Activated CD8-positive, alpha-beta T cell treated with anti-CD3 and anti-CD28 coated beads for 36 hours (primary cell): ENCODE measurements at regions of chr14 and their contacts with region 1.

Region 1: DNA sequence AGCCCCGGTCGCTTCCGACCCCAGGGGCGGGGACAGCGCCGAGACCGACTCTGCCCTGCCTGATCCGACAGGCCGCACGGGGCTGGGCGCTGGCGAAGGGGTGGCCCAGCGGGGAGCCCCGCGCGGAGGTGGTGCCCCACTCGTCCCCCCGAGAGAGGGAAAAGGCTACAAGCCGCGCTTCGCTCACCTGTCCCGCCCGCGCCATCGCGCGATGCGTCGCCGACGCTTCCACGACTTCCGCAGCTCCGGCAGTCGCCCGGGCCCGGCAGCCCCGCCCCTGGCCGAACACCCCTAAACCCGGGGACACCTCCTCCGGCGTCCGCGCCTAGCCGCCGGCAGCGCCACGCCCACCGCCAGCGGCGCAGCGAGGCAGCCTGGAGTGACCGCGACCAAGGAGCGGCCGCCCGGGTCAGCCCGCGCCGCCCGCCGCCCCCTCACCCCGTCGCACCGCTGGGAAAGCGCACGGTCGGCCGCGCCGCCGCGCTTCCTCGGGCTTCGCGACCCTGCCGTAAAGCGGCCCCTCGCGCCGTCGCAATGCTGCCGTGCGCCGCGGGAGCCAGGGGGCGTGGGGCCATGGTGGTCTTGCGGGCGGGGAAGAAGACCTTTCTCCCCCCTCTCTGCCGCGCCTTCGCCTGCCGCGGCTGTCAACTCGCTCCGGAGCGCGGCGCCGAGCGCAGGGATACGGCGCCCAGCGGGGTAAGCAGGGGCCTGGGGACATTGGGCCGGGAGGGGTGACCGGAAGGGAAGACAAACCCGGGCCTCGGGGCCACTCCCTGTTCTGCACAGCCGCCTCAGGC is at the starts of genes BAG5 and COA8:
- DNase-seq: peak; percentile 92
- ATAC-seq: peak; percentile 83
- H3K4me3 Mint-ChIP-seq: peak within 1 kb of the TSS; percentile 100
- H3K27ac Mint-ChIP-seq: peak within 1 kb of the TSS; percentile 97
- H3K4me1 Mint-ChIP-seq: peaks cover 48% of the 10 kb centered on the region
- H3K27me3 Mint-ChIP-seq: no peaks in the 10 kb centered on the region
- CTCF ChIP-seq: no peak
- total RNA-seq, gene BAG5: 28.8 to 29.6 TPM
- total RNA-seq, gene COA8: 40.3 to 45.6 TPM

Region 2: DNA sequence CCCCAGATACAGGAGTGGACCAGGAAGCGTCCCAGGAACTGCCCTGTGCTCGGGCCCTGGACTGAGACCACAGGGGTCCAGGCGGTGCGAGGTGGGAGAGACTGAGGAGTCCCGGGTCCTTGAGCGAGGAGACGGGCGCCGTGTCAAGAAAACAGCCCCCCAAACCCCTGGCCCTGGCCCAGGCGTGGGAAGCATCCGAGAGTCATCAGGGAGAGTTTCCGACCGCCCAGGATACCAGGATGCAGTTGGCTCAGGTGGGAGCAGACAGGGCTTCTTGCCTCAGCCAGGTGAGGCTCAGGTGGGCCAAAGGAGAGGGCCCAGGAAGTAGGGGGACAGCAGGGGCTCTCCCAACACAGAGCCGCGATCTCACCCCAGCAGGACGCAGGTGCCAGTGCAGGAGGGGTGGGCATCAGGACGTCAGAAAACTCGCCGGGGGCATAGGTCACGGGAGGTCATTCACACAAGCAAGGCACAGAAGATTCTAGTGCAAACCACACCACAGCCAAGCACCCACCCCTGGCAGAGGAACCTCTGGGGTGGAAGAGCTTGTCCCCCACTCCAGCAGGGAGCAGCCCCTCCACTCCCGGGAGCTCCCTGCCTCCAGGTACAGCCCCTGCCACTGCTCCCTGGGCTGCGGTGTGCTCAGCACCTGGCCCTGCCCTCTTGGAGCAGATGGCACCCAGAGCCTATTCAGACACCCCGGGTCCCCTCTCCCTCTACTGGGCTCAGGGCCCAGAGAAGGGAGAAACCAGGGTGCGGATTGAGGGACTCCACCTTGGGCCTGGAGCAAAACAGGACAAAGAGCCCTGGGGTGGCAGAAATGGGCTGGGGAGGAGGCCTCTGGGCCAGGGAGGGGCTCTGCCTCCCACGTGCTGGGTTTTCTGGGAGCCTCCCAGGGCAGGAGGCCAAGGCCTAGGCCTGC is 331.0 kb before region 1 on chr14:
- CTCF ChIA-PET with region 1: no interaction called
- POLR2A ChIA-PET with region 1: no interaction called
- intact Hi-C with region 1: no loop called
- DNase-seq: no peak
- ATAC-seq: no peak
- H3K4me3 Mint-ChIP-seq: no peak overlapping the region
- H3K27ac Mint-ChIP-seq: no peak overlapping the region
- H3K4me1 Mint-ChIP-seq: no peaks in the 10 kb centered on the region
- H3K27me3 Mint-ChIP-seq: peaks cover 10% of the 10 kb centered on the region
- CTCF ChIP-seq: no peak

Region 3: GRCh38 chr14:103508521-103509329 is 53.9 kb before region 1 on chr14:
- CTCF ChIA-PET with region 1: no interaction called
- POLR2A ChIA-PET with region 1: no interaction called
- intact Hi-C with region 1: no loop called
- DNase-seq: no peak
- ATAC-seq: no peak
- H3K4me3 Mint-ChIP-seq: no peak overlapping the region
- H3K27ac Mint-ChIP-seq: no peak overlapping the region
- H3K4me1 Mint-ChIP-seq: no peaks in the 10 kb centered on the region
- H3K27me3 Mint-ChIP-seq: no peaks in the 10 kb centered on the region
- CTCF ChIP-seq: no peak

Region 4: GRCh38 chr14:103520657-103521437 is 41.8 kb before region 1 on chr14:
- CTCF ChIA-PET with region 1: interaction called, 10 read pairs
- POLR2A ChIA-PET with region 1: interaction called, 3 read pairs
- intact Hi-C with region 1: no loop called
- DNase-seq: peak; percentile 76
- ATAC-seq: peak; percentile 72
- H3K4me3 Mint-ChIP-seq: peak overlapping the region; percentile 50
- H3K27ac Mint-ChIP-seq: no peak overlapping the region
- H3K4me1 Mint-ChIP-seq: peaks cover 10% of the 10 kb centered on the region
- H3K27me3 Mint-ChIP-seq: peaks cover 12% of the 10 kb centered on the region
- CTCF ChIP-seq: peak; percentile 59

Region 5: DNA sequence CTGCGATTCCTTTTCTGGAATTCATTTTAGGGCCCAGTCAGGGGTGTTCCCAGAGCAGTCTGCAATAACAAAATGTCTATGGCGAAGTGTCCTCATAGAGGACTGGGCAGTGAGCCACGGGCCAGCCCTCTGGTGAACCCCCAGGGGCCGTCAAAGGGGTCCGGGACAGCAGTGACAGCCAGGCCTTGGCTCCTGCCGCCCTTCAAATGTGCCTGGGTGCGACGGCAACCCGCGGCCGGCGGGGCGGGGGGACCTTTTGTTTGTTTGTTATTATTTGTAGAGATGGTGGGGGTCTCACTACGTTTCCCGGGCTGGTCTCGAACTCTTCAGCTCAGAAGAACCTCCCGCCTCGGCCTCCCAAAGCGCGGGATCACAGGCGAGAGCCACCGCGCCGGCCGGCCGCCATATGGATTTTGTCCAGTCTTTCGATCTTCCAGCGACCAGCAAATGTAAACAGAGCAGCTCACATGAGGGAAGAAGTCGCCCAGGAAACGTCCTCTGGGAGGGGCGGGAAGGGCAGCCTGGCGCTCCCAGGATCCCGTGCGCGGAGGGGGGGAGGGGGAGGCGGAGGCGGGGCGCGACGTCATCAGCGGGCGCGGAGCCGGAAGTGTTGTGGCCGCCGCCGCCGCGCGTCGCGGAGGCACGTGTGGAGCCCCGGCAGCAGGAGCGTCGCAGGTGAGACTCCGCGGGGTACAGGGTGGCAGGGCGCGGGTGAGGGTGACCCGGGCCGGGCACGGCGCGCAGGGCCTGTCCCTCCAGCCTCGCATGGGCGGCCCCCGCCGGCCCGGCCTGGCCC is 33.8 kb before region 1 on chr14 and contains the start of gene TRMT61A:
- CTCF ChIA-PET with region 1: interaction called, 3 read pairs
- POLR2A ChIA-PET with region 1: interaction called, 28 read pairs
- intact Hi-C with region 1: no loop called
- DNase-seq: peak; percentile 71
- ATAC-seq: peak; percentile 74
- H3K4me3 Mint-ChIP-seq: peak within 1 kb of the TSS; percentile 94
- H3K27ac Mint-ChIP-seq: peak within 1 kb of the TSS; percentile 95
- H3K4me1 Mint-ChIP-seq: peaks cover 34% of the 10 kb centered on the region
- H3K27me3 Mint-ChIP-seq: peaks cover 6% of the 10 kb centered on the region
- CTCF ChIP-seq: no peak
- total RNA-seq, gene TRMT61A: 9.9 TPM

Region 6: GRCh38 chr14:103546652-103547454 is 15.8 kb before region 1 on chr14:
- CTCF ChIA-PET with region 1: interaction called, 19 read pairs
- POLR2A ChIA-PET with region 1: interaction called, 10 read pairs
- intact Hi-C with region 1: no loop called
- DNase-seq: peak; percentile 85
- ATAC-seq: peak; percentile 91
- H3K4me3 Mint-ChIP-seq: no peak overlapping the region
- H3K27ac Mint-ChIP-seq: no peak overlapping the region
- H3K4me1 Mint-ChIP-seq: no peaks in the 10 kb centered on the region
- H3K27me3 Mint-ChIP-seq: no peaks in the 10 kb centered on the region
- CTCF ChIP-seq: peak; percentile 98

Region 7: GRCh38 chr14:103576371-103577024 is 13.9 kb after region 1 on chr14:
- CTCF ChIA-PET with region 1: interaction called, 10 read pairs
- POLR2A ChIA-PET with region 1: interaction called, 4 read pairs
- intact Hi-C with region 1: no loop called
- DNase-seq: no peak
- ATAC-seq: no peak
- H3K4me3 Mint-ChIP-seq: no peak overlapping the region
- H3K27ac Mint-ChIP-seq: no peak overlapping the region
- H3K4me1 Mint-ChIP-seq: no peaks in the 10 kb centered on the region
- H3K27me3 Mint-ChIP-seq: no peaks in the 10 kb centered on the region
- CTCF ChIP-seq: no peak

Region 8: GRCh38 chr14:103628684-103629502 is 66.3 kb after region 1 on chr14 and contains the start of gene KLC1:
- CTCF ChIA-PET with region 1: no interaction called
- POLR2A ChIA-PET with region 1: interaction called, 19 read pairs
- intact Hi-C with region 1: no loop called
- DNase-seq: peak; percentile 85
- ATAC-seq: peak; percentile 81
- H3K4me3 Mint-ChIP-seq: peak within 1 kb of the TSS; percentile 84
- H3K27ac Mint-ChIP-seq: peak within 1 kb of the TSS; percentile 85
- H3K4me1 Mint-ChIP-seq: peaks cover 30% of the 10 kb centered on the region
- H3K27me3 Mint-ChIP-seq: no peaks in the 10 kb centered on the region
- CTCF ChIP-seq: no peak
- total RNA-seq, gene KLC1: 97.5 to 101 TPM

Region 9: GRCh38 chr14:103819503-103820307 is 257.1 kb after region 1 on chr14:
- CTCF ChIA-PET with region 1: no interaction called
- POLR2A ChIA-PET with region 1: no interaction called
- intact Hi-C with region 1: no loop called
- DNase-seq: no peak
- ATAC-seq: peak; percentile 30
- H3K4me3 Mint-ChIP-seq: no peak overlapping the region
- H3K27ac Mint-ChIP-seq: no peak overlapping the region
- H3K4me1 Mint-ChIP-seq: peaks cover 40% of the 10 kb centered on the region
- H3K27me3 Mint-ChIP-seq: no peaks in the 10 kb centered on the region
- CTCF ChIP-seq: no peak